Aorta (tissue), 5 donors: ENCODE measurements at regions of chr15 and their contacts with region 1.

Region 1: GRCh38 chr15:79380755-79381497 is 51.2 kb upstream of the MINAR1 start:
- DNase-seq: peak; percentile 83 to 91
- ATAC-seq: peak; percentile 83
- H3K4me3 ChIP-seq: no peak overlapping the region
- H3K27ac ChIP-seq: no peak overlapping the region
- H3K4me1 ChIP-seq: no peaks in the 10 kb centered on the region
- H3K27me3 ChIP-seq: no peaks in the 10 kb centered on the region

Region 2: GRCh38 chr15:79535536-79535935 is 154.6 kb after region 1 on chr15:
- intact Hi-C with region 1: no loop called
- DNase-seq: no peak
- ATAC-seq: no peak
- H3K4me3 ChIP-seq: no peak overlapping the region
- H3K27ac ChIP-seq: no peak overlapping the region
- H3K4me1 ChIP-seq: no peaks in the 10 kb centered on the region
- H3K27me3 ChIP-seq: no peaks in the 10 kb centered on the region

Region 3: GRCh38 chr15:79596051-79596507 is 215.2 kb after region 1 on chr15:
- intact Hi-C with region 1: loop called (anchors 2 to 5 kb)
- DNase-seq: peak in 1 of 2 donors; percentile 60
- ATAC-seq: peak; percentile 86
- H3K4me3 ChIP-seq: no peak overlapping the region
- H3K27ac ChIP-seq: no peak overlapping the region
- H3K4me1 ChIP-seq: no peaks in the 10 kb centered on the region
- H3K27me3 ChIP-seq: no peaks in the 10 kb centered on the region

Region 4: GRCh38 chr15:79853458-79854328 is 472.8 kb after region 1 on chr15:
- intact Hi-C with region 1: loop called (anchors 2 to 5 kb)
- DNase-seq: peak in 1 of 2 donors; percentile 62
- ATAC-seq: peak; percentile 92
- H3K4me3 ChIP-seq: no peak overlapping the region
- H3K27ac ChIP-seq: no peak overlapping the region
- H3K4me1 ChIP-seq: no peaks in the 10 kb centered on the region
- H3K27me3 ChIP-seq: no peaks in the 10 kb centered on the region